Heart left ventricle (tissue), 16 donors: ENCODE measurements at regions of chr1 and their contacts with region 1.

Region 1: GRCh38 chr1:170881268-170882265 is 53.8 kb upstream of the MROH9 start:
- DNase-seq: peak in 1 of 5 donors; percentile 17
- ATAC-seq: peak in 2 of 4 donors; percentile 65 to 80
- H3K4me3 ChIP-seq: peak overlapping the region in 7 of 12 donors; percentile 3 to 44 (median 22)
- H3K27ac ChIP-seq: no peak overlapping the region
- H3K4me1 ChIP-seq: peaks cover 0 to 10% (median 0%) of the 10 kb centered on the region in 12 donors
- H3K27me3 ChIP-seq: no peaks in the 10 kb centered on the region
- CTCF ChIP-seq: peak; percentile 20 to 74 (median 65)
- POLR2A ChIP-seq: no peak

Region 2: GRCh38 chr1:169928438-169929209 is 952.9 kb before region 1 on chr1:
- intact Hi-C with region 1: loop called in 7 of 10 experiments (anchors 2 to 10 kb)
- DNase-seq: no peak
- ATAC-seq: peak in 3 of 4 donors; percentile 58 to 71 (median 63)
- H3K4me3 ChIP-seq: no peak overlapping the region
- H3K27ac ChIP-seq: no peak overlapping the region
- H3K4me1 ChIP-seq: peaks cover 0 to 20% (median 6%) of the 10 kb centered on the region in 12 donors
- H3K27me3 ChIP-seq: no peaks in the 10 kb centered on the region
- CTCF ChIP-seq: peak; percentile 65 to 86 (median 69)
- POLR2A ChIP-seq: no peak

Region 3: GRCh38 chr1:169999331-169999741 is 882.2 kb before region 1 on chr1:
- intact Hi-C with region 1: loop called in 1 of 10 experiments (anchors 10 kb)
- DNase-seq: peak in 2 of 5 donors; percentile 6 to 35
- ATAC-seq: peak in 1 of 4 donors; percentile 22
- H3K4me3 ChIP-seq: no peak overlapping the region
- H3K27ac ChIP-seq: peak overlapping the region in 6 of 12 donors; percentile 12 to 50 (median 32)
- H3K4me1 ChIP-seq: peaks cover 0 to 16% (median 0%) of the 10 kb centered on the region in 12 donors
- H3K27me3 ChIP-seq: no peaks in the 10 kb centered on the region
- CTCF ChIP-seq: no peak
- POLR2A ChIP-seq: no peak

Region 4: DNA sequence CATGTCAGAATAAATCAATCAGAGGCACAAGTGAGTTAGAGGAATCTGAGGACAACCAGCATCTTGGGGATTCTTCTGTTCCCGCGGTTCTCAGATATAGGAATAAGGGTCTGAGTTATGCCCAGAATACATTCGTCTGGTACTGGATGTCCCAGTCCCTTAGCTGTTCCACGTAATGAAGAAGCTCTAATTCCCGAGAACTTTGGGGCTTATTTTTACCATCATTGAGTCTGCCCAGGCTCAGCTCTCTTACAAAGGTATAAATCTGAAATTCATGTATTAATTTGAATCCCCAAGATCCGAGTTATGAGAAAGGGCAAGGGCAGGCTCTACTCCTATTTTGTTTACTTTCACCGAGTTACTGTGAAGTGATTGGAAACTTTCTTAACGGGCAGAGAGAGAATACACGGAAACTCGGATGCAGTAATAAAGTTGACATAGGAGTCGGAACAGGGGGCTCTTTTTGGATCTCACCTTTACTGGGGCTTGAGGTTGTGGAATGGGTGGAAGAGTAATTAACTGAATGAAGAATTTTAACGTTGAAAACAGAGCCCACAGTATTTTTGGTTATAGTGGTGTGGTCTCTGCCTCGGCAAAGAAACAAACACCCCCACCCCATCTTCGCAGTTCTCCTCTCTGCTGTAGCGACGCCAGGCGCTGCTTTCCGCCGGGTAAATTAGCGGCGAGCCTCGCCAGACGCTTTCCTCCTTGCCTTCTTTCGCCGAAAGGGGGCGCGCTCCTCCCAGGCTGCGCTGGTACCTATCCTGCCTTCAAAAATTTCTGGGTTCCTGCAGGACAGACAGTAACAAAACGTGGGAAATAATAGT is 210.6 kb before region 1 on chr1:
- intact Hi-C with region 1: loop called in 6 of 10 experiments (anchors 2 to 10 kb)
- DNase-seq: peak in 4 of 5 donors; percentile 53 to 64 (median 56)
- ATAC-seq: peak; percentile 14 to 66 (median 46)
- H3K4me3 ChIP-seq: peak overlapping the region in 3 of 12 donors; percentile 16 to 25 (median 19)
- H3K27ac ChIP-seq: peak overlapping the region in 3 of 12 donors; percentile 3 to 15 (median 4)
- H3K4me1 ChIP-seq: peaks cover 0 to 67% (median 10%) of the 10 kb centered on the region in 12 donors
- H3K27me3 ChIP-seq: peaks cover 0 to 57% (median 4%) of the 10 kb centered on the region in 9 donors
- CTCF ChIP-seq: peak; percentile 21 to 72 (median 55)
- POLR2A ChIP-seq: no peak

Region 5: DNA sequence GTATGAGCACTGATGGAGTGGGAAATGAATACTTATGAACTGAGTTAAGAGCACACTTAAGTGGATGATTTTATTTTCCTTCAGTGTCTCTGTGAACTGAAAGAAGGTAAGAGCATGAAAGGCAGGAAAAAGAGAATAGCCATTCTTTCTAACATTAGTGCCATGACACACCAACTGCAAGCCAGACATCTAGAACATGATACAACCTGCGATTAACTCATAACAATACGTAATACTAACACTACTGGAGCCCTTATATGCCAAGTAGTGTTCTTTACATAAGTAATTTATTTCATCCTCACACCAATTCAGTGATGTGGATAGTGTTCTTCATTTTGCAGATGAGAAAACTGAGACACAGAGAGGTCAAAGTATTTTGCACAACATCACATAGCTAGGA is 160.9 kb before region 1 on chr1:
- intact Hi-C with region 1: no loop called
- DNase-seq: no peak
- ATAC-seq: no peak
- H3K4me3 ChIP-seq: no peak overlapping the region
- H3K27ac ChIP-seq: no peak overlapping the region
- H3K4me1 ChIP-seq: peaks cover 0 to 24% (median 0%) of the 10 kb centered on the region in 12 donors
- H3K27me3 ChIP-seq: no peaks in the 10 kb centered on the region
- CTCF ChIP-seq: no peak
- POLR2A ChIP-seq: no peak

Region 6: DNA sequence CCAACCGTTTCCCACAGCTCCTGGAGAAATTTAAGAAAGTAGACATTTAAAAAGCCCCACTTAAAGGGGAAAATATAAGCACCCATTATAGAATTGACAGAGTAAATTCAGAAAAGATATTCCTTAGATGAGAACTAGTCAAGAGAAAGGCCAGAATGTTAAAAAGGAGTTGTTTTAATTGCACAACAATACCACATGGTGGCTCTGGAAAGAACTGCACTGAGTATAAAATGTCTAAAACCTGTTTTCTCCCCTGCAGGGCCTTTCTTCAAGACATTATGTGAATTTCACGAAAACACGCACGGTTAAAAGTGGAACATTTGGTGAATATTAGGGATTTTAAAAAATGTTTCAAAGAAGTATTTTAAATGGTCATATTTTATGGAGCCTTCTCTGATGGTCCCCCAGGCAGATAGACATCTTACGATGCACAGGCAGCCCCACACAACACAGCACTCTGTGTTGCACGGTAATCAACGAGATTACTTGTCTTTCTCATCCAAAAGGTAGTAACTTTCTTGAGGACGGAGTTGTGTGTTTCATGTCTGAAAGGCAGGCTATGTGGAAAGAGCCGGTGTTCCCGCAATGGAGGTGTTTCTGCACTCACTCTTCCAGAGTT is 115.7 kb before region 1 on chr1:
- intact Hi-C with region 1: loop called in 3 of 10 experiments (anchors 5 to 10 kb)
- DNase-seq: no peak
- ATAC-seq: peak in 3 of 4 donors; percentile 45 to 71 (median 49)
- H3K4me3 ChIP-seq: no peak overlapping the region
- H3K27ac ChIP-seq: no peak overlapping the region
- H3K4me1 ChIP-seq: peaks cover 0 to 6% (median 0%) of the 10 kb centered on the region in 12 donors
- H3K27me3 ChIP-seq: no peaks in the 10 kb centered on the region
- CTCF ChIP-seq: peak; percentile 33 to 72 (median 56)
- POLR2A ChIP-seq: no peak

Region 7: DNA sequence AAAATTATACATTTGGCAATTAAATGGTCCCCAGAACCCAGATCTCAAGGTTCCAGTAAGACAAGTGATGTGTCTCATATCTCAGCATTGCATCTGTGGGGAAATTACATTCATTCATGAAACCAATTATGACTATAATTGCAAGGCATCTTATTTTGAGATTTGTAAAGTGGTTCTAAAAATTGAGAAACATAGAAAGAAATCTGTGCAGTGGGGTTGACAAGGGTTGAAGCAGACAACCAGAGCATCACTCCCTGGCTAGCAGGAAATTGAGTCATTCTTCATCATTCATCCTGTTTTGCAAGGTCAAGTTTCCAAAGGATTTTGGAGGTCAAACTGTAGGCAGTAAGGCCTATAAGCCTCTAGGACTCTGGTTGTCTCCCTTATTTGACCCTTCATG is 28.7 kb after region 1 on chr1:
- intact Hi-C with region 1: no loop called
- DNase-seq: no peak
- ATAC-seq: no peak
- H3K4me3 ChIP-seq: no peak overlapping the region
- H3K27ac ChIP-seq: peak overlapping the region in 1 of 12 donors; percentile 11
- H3K4me1 ChIP-seq: no peaks in the 10 kb centered on the region
- H3K27me3 ChIP-seq: no peaks in the 10 kb centered on the region
- CTCF ChIP-seq: no peak
- POLR2A ChIP-seq: no peak

Region 8: DNA sequence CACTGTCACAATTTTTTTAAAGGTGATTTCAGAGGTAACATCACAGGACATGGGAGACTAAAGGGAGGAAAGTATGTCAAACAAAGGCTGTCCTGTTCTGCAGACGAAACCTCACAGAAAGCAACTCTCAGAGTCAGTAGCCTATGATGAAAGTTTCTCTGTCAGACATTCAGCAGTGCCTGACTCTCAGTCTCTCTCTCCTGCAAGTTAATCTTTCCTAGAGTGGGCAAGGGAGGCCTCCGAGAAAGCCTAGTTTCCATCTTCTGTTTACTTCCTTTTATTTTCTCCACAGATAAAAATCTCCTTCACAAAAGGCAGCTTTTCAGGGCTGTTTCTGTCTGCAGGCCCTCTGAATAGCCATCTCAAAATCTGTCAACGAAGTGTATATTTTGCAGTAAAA is 278.6 kb after region 1 on chr1:
- intact Hi-C with region 1: no loop called
- DNase-seq: no peak
- ATAC-seq: peak in 1 of 4 donors; percentile 42
- H3K4me3 ChIP-seq: no peak overlapping the region
- H3K27ac ChIP-seq: peak overlapping the region in 5 of 12 donors; percentile 3 to 66 (median 30)
- H3K4me1 ChIP-seq: peaks cover 0 to 15% (median 2%) of the 10 kb centered on the region in 12 donors
- H3K27me3 ChIP-seq: no peaks in the 10 kb centered on the region
- CTCF ChIP-seq: no peak
- POLR2A ChIP-seq: no peak

Region 9: DNA sequence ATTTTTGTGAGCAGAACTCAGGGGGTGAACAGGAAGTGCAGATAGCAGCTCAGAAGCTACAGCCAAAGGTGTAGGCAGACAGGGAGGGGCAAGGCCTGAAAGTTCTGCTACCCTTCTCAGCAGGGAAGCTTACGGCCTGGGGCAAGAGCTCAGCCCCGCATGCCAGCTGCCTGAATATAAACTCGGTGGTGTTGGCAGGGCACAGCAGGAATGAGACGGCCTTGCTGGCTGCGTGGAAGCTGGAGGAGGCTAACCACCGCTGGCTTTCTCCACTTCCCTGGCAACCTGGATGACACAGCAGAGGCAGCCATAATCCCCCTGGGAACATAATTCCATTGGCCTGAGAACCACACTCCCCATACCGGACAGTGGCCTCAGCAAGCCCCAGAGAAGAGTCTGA is 521.8 kb after region 1 on chr1:
- intact Hi-C with region 1: no loop called
- DNase-seq: no peak
- ATAC-seq: no peak
- H3K4me3 ChIP-seq: no peak overlapping the region
- H3K27ac ChIP-seq: no peak overlapping the region
- H3K4me1 ChIP-seq: no peaks in the 10 kb centered on the region
- H3K27me3 ChIP-seq: no peaks in the 10 kb centered on the region
- CTCF ChIP-seq: no peak
- POLR2A ChIP-seq: no peak